ENCODE measurements at regions of chr3 and their contacts with region 1.

Region 1: DNA sequence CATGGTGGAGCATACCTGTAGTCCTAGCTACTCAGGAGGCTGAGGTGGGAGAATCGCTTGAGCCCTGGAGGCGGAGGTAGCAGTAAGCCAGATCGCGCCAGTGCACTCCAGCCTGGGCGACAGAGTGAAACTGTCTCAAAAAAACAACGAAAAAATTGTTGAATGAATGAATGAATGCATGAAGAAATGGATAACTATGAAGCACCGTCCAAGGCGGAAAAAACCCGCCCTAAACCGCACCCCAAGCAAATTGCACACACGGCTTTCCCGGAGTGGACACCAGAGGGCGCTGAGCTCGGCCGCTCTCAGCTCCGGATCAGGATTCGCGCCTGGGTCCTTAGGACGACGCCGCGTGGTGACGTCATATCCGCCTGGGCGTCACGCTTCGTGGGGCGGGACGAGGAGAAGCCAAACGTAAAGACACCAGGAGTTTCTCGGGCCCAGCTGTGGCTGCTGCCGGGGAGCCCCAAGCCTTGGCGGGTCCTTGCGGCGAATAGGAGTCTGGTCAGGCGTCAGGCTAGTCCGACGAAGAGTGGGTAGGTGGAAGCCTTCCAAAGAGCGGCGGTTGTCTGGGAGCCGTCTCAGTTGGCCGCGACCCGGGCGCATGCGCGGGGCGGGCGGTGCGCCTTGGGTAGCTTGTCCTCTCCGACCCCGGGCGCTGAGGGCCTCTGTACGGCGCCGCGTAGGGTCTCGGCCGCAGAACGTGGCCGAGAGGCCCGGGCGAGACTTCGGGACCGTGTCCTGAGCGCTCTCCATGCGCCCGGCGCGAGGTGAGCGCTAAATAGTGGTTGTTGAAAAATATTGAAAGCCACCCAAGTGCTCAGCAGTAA is at the starts of genes HTD2 and RPP14:
- DNase-seq: peak; percentile 99
- H3K4me3 Mint-ChIP-seq: peak within 1 kb of the TSS; percentile 94
- H3K27ac Mint-ChIP-seq: peak within 1 kb of the TSS; percentile 98
- H3K4me1 Mint-ChIP-seq: peaks cover 32% of the 10 kb centered on the region
- H3K27me3 Mint-ChIP-seq: peaks cover 7% of the 10 kb centered on the region
- total RNA-seq, gene HTD2: 7.6 to 9.5 TPM
- total RNA-seq, gene RPP14: 14.0 to 15.4 TPM

Region 2: GRCh38 chr3:58188173-58188564 is 117.9 kb before region 1 on chr3:
- CTCF ChIA-PET with region 1: interaction called, 56 read pairs
- POLR2A ChIA-PET with region 1: no interaction called
- intact Hi-C with region 1: loop called (anchors 2 kb)
- DNase-seq: no peak
- H3K4me3 Mint-ChIP-seq: no peak overlapping the region
- H3K27ac Mint-ChIP-seq: no peak overlapping the region
- H3K4me1 Mint-ChIP-seq: no peaks in the 10 kb centered on the region
- H3K27me3 Mint-ChIP-seq: no peaks in the 10 kb centered on the region

Region 3: DNA sequence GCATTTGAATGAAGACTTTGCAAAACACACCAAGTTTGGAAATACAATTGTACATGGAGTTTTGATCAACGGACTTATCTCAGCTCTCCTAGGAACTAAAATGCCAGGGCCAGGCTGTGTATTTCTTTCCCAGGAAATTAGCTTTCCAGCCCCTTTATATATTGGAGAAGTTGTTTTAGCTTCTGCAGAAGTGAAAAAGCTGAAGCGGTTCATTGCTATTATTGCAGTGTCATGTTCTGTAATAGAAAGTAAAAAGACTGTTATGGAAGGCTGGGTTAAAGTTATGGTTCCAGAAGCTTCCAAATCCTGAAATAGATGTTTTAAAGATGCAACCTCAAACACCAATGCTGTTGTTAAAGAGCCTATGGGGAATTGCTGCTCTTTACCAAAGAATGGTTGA is 11.7 kb after region 1 on chr3:
- CTCF ChIA-PET with region 1: interaction called, 48 read pairs
- POLR2A ChIA-PET with region 1: interaction called, 4 read pairs
- intact Hi-C with region 1: no loop called
- DNase-seq: no peak
- H3K4me3 Mint-ChIP-seq: no peak overlapping the region
- H3K27ac Mint-ChIP-seq: peak overlapping the region; percentile 8
- H3K4me1 Mint-ChIP-seq: peaks cover 6% of the 10 kb centered on the region
- H3K27me3 Mint-ChIP-seq: no peaks in the 10 kb centered on the region

Region 4: GRCh38 chr3:58349792-58350626 is 43.9 kb after region 1 on chr3:
- CTCF ChIA-PET with region 1: interaction called, 10 read pairs
- POLR2A ChIA-PET with region 1: interaction called, 5 read pairs
- intact Hi-C with region 1: no loop called
- DNase-seq: no peak
- H3K4me3 Mint-ChIP-seq: no peak overlapping the region
- H3K27ac Mint-ChIP-seq: no peak overlapping the region
- H3K4me1 Mint-ChIP-seq: peaks cover 45% of the 10 kb centered on the region
- H3K27me3 Mint-ChIP-seq: no peaks in the 10 kb centered on the region

Region 5: DNA sequence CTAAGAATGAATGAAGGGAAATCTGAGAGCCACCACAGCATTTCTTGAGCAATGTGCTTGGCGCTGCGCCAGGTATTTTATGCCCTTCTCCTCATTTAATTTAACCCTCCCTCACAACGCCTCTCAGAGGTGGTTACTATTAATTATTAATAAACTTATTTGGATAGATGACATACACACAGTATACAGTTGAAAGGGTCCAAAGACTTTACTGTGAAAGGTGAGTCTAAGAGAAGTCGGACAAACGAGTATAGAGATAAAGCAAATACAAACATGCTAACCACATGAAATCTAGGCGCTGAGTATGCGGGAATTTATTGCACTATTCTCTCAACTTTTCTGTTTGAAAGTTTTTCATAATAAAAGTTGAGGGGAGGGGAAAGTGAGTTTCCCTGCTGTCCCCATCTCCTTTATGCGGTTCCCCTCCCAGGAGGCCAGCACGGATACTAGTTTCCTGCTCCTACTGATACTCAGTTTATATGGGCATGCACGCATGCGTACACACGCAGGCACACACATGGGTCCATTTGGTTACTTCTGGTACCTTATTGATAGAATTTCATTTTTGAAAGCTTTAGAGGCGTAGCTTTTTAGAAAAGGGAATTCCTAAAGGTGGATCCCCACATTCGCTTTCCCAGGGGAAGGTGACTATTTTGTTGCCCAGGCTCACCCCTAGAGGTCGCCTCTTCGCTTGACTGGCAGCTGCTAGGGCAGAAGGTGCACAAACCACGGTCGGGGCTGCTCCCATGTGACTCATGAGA is 157.3 kb after region 1 on chr3:
- CTCF ChIA-PET with region 1: interaction called, 13 read pairs
- POLR2A ChIA-PET with region 1: interaction called, 5 read pairs
- intact Hi-C with region 1: loop called (anchors 1 kb)
- DNase-seq: peak; percentile 90
- H3K4me3 Mint-ChIP-seq: no peak overlapping the region
- H3K27ac Mint-ChIP-seq: peak overlapping the region; percentile 54
- H3K4me1 Mint-ChIP-seq: peaks cover 17% of the 10 kb centered on the region
- H3K27me3 Mint-ChIP-seq: no peaks in the 10 kb centered on the region

Region 6: DNA sequence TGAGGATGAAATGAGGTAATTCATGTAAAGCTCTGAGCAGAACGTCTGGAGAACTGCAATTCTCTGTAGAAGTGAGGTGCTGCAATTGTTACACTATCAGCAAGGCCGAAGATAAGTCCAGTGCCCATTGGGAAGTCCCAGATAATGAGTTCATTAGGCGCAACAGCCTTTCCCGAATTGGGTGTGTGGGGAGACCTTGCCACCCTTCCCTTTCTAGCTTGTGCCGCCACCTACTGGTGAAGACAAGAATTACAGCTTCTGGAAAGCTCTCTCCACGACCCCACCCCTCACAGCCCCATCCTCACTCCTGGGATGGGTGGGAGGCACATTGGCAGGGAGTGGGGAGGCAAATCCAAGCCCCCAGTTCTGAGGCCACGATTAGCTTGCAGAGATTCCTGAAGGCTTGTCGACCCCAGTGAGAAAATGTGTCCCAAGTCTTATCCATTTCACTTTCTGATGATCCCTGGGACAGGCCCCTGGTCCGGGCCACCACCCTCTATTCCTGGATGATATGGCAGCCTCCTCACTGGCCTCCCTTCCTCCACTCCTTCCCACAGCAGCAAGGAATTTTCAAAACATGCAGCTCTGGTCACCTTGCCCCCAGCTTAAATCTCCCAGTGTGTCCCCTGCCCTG is 324.1 kb after region 1 on chr3:
- CTCF ChIA-PET with region 1: interaction called, 22 read pairs
- POLR2A ChIA-PET with region 1: no interaction called
- intact Hi-C with region 1: loop called (anchors 2 kb)
- DNase-seq: peak; percentile 72
- H3K4me3 Mint-ChIP-seq: no peak overlapping the region
- H3K27ac Mint-ChIP-seq: no peak overlapping the region
- H3K4me1 Mint-ChIP-seq: no peaks in the 10 kb centered on the region
- H3K27me3 Mint-ChIP-seq: peaks cover 6% of the 10 kb centered on the region